CD8-positive, alpha-beta T cell (primary cell): ENCODE measurements at regions of chr15 and their contacts with region 1.

Region 1: GRCh38 chr15:60362321-60363086 is 35.3 kb downstream of the ANXA2 start:
- DNase-seq: peak in 1 of 9 experiments; percentile 7
- ATAC-seq: peak; percentile 61
- H3K4me3 ChIP-seq: no peak overlapping the region
- H3K4me3 Mint-ChIP-seq: no peak overlapping the region
- H3K27ac ChIP-seq: peak overlapping the region in 1 of 2 experiments; percentile 16
- H3K27ac Mint-ChIP-seq: no peak overlapping the region
- H3K4me1 ChIP-seq: no peaks in the 10 kb centered on the region
- H3K4me1 Mint-ChIP-seq: peaks cover 5% of the 10 kb centered on the region
- H3K27me3 ChIP-seq: no peaks in the 10 kb centered on the region
- H3K27me3 Mint-ChIP-seq: no peaks in the 10 kb centered on the region
- CTCF ChIP-seq: no peak

Region 2: DNA sequence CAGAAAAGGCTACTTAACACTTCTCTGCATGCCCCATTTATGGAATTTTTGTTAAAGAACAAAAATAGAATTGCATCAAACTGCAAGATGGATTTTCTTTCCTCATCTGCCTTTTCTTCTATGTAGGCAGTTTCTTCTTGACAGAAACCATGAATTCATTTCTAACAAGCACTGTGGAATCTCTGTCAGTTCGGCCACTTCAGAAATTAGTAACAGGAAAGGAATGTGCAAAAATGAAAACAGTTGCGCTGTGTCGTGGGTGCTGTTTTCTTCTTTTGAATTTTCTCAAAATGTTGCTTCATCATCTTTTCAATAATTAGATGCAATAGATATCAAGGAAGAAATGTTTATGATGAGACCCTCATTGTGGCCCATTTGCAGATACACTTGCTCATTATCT is 206.8 kb before region 1 on chr15:
- CTCF ChIA-PET with region 1: no interaction called
- POLR2A ChIA-PET with region 1: no interaction called
- intact Hi-C with region 1: no loop called
- DNase-seq: no peak
- ATAC-seq: no peak
- H3K4me3 ChIP-seq: no peak overlapping the region
- H3K4me3 Mint-ChIP-seq: no peak overlapping the region
- H3K27ac ChIP-seq: no peak overlapping the region
- H3K27ac Mint-ChIP-seq: no peak overlapping the region
- H3K4me1 ChIP-seq: no peaks in the 10 kb centered on the region
- H3K4me1 Mint-ChIP-seq: no peaks in the 10 kb centered on the region
- H3K27me3 ChIP-seq: peaks cover 0 to 3% of the 10 kb centered on the region in 2 experiments
- H3K27me3 Mint-ChIP-seq: peaks cover 19% of the 10 kb centered on the region
- CTCF ChIP-seq: no peak

Region 3: DNA sequence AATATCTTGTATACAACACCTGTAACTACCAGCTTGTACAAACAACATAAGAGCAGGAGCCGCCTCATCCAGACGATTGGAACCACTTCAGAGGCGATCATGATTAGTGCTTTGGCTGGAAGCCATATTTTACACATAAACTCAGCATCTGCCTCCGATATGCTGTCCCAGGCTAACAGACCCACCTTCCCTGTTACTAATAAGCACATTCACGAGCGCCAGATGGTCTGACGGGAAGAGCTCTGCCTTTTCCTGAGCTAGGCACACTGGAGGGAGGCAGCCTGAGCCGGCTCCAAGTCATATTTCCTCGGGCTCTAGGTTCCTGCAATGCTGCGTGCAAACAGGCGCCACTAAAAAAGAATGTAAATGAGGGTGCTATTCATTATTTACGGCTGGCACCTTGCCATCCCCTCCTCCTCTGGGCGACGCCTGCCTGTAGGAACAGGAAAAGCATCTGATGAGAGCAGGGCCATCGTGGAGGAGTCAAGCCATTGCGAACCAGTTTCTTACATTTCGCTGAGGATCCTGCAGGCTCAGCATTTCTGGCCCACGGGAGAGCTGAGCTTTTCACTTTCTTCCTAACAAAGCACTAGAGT is 63.0 kb before region 1 on chr15:
- CTCF ChIA-PET with region 1: no interaction called
- POLR2A ChIA-PET with region 1: no interaction called
- intact Hi-C with region 1: no loop called
- DNase-seq: no peak
- ATAC-seq: no peak
- H3K4me3 ChIP-seq: no peak overlapping the region
- H3K4me3 Mint-ChIP-seq: no peak overlapping the region
- H3K27ac ChIP-seq: no peak overlapping the region
- H3K27ac Mint-ChIP-seq: no peak overlapping the region
- H3K4me1 ChIP-seq: no peaks in the 10 kb centered on the region
- H3K4me1 Mint-ChIP-seq: no peaks in the 10 kb centered on the region
- H3K27me3 ChIP-seq: no peaks in the 10 kb centered on the region
- H3K27me3 Mint-ChIP-seq: peaks cover 20% of the 10 kb centered on the region
- CTCF ChIP-seq: no peak

Region 4: DNA sequence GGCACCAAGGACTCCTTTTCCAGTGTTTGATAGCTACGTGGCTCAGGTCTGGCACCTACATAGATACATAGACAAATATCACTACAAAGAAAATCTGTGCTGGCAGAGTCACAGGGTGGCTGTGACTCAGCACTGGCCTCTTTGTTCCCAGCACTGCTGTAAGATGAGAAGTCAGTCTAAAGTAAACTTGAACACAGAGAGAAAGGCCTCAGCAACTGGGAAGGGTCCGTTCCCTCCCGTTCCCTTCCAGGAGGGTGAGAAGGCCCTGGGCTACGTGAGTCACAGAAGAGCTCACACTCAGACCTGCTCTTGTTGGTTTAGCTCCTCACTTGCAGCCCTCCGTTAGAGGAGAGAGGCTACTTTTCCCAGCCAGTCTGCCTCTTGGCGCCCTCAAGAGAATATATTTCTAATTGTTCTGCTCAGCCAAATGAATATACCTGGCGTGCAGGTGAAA is 12.2 kb after region 1 on chr15:
- CTCF ChIA-PET with region 1: interaction called, 30 read pairs
- POLR2A ChIA-PET with region 1: interaction called, 3 read pairs
- intact Hi-C with region 1: no loop called
- DNase-seq: no peak
- ATAC-seq: no peak
- H3K4me3 ChIP-seq: no peak overlapping the region
- H3K4me3 Mint-ChIP-seq: no peak overlapping the region
- H3K27ac ChIP-seq: no peak overlapping the region
- H3K27ac Mint-ChIP-seq: no peak overlapping the region
- H3K4me1 ChIP-seq: no peaks in the 10 kb centered on the region
- H3K4me1 Mint-ChIP-seq: no peaks in the 10 kb centered on the region
- H3K27me3 ChIP-seq: no peaks in the 10 kb centered on the region
- H3K27me3 Mint-ChIP-seq: no peaks in the 10 kb centered on the region
- CTCF ChIP-seq: no peak

Region 5: DNA sequence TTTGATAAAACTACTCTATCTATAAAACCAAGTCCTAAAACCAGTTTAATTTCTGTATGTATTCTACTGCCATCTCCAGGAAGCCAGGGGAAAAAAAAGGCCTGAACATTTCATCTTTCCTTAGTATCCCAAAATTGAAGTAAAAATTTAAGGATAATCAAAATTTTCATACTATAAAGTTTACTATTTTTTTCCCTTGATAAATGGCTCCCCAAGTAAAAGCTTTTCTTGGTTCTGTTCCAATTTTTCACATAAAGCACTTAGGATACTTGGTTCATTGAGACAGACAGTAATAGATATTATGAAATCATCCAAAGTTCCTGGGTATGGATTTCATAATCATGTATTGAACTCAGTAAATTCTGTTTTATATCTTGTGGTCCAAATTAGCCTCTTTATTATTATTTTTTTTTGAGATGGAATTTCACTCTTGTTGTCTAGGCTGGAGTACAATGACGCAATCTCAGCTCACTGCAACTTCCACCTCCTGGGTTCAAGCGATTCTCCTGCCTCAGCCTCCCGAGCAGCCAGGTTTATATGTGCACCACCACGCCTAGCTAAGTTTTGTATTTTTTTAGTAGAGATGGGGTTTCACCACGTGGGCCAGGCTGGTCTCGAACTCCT is 81.9 kb after region 1 on chr15:
- CTCF ChIA-PET with region 1: interaction called, 10 read pairs
- POLR2A ChIA-PET with region 1: no interaction called
- intact Hi-C with region 1: loop called (anchors 1 kb)
- DNase-seq: peak in 1 of 9 experiments; percentile 19
- ATAC-seq: no peak
- H3K4me3 ChIP-seq: no peak overlapping the region
- H3K4me3 Mint-ChIP-seq: no peak overlapping the region
- H3K27ac ChIP-seq: no peak overlapping the region
- H3K27ac Mint-ChIP-seq: no peak overlapping the region
- H3K4me1 ChIP-seq: no peaks in the 10 kb centered on the region
- H3K4me1 Mint-ChIP-seq: peaks cover 7% of the 10 kb centered on the region
- H3K27me3 ChIP-seq: no peaks in the 10 kb centered on the region
- H3K27me3 Mint-ChIP-seq: no peaks in the 10 kb centered on the region
- CTCF ChIP-seq: no peak

Region 6: GRCh38 chr15:60568301-60568742 is 205.8 kb after region 1 on chr15:
- CTCF ChIA-PET with region 1: no interaction called
- POLR2A ChIA-PET with region 1: no interaction called
- intact Hi-C with region 1: no loop called
- DNase-seq: peak in 1 of 9 experiments; percentile 41
- ATAC-seq: no peak
- H3K4me3 ChIP-seq: no peak overlapping the region
- H3K4me3 Mint-ChIP-seq: peak overlapping the region; percentile 27
- H3K27ac ChIP-seq: peak overlapping the region in 1 of 2 experiments; percentile 68
- H3K27ac Mint-ChIP-seq: peak overlapping the region; percentile 80
- H3K4me1 ChIP-seq: peaks cover 93% of the 10 kb centered on the region
- H3K4me1 Mint-ChIP-seq: peaks cover 93% of the 10 kb centered on the region
- H3K27me3 ChIP-seq: no peaks in the 10 kb centered on the region
- H3K27me3 Mint-ChIP-seq: no peaks in the 10 kb centered on the region
- CTCF ChIP-seq: no peak

Region 7: DNA sequence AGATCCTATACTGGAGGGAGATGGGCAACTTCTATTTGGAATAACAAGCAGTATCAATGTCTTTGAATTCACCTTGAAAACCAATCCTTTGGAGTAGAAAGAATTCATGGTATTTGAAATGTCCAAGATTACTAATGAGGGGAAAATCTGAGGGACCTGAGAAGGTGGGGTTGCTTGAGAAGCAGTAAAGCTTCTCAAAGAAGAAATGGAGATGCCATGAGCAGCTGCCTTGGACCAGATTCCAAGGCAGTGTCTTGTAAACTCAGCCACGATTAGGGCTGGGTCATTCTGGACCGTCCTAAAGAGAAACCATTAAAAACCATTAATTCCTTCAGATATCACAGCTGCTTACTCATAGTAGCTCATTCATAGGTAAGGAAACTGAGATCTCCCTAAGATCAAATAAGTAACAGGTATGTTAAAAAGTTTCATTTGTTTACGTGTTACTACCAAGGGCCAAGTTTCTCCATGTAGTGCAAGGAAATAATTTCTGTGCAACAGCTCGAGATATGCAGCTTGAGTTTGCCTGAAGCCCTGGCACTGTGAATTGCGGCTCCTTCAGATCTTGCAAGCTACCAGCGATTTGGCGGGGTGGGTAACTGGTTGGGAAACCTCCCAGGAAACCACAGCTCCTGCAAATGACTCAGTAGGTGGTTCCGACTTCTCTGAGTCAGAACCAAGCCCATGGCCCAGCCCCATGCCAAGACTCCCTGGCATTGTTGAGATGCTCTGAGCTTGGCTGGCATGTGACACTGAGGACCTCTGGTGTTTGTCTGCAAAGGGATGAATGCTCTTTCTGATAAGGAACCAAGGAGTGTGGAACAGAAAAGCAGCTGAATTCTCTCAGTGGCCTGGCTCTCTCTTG is 569.8 kb after region 1 on chr15:
- CTCF ChIA-PET with region 1: interaction called, 9 read pairs
- POLR2A ChIA-PET with region 1: no interaction called
- intact Hi-C with region 1: loop called in 1 of 2 experiments (anchors 1 kb)
- DNase-seq: peak; percentile 6 to 77 (median 52)
- ATAC-seq: peak; percentile 73
- H3K4me3 ChIP-seq: no peak overlapping the region
- H3K4me3 Mint-ChIP-seq: no peak overlapping the region
- H3K27ac ChIP-seq: no peak overlapping the region
- H3K27ac Mint-ChIP-seq: no peak overlapping the region
- H3K4me1 ChIP-seq: peaks cover 8% of the 10 kb centered on the region
- H3K4me1 Mint-ChIP-seq: peaks cover 7% of the 10 kb centered on the region
- H3K27me3 ChIP-seq: no peaks in the 10 kb centered on the region
- H3K27me3 Mint-ChIP-seq: peaks cover 3% of the 10 kb centered on the region
- CTCF ChIP-seq: no peak

Region 8: GRCh38 chr15:61834076-61834697 is 1471.7 kb after region 1 on chr15:
- CTCF ChIA-PET with region 1: interaction called, 15 read pairs
- POLR2A ChIA-PET with region 1: no interaction called
- intact Hi-C with region 1: loop called in 1 of 2 experiments (anchors 1 kb)
- DNase-seq: peak; percentile 39 to 78 (median 71)
- ATAC-seq: peak; percentile 85
- H3K4me3 ChIP-seq: no peak overlapping the region
- H3K4me3 Mint-ChIP-seq: no peak overlapping the region
- H3K27ac ChIP-seq: no peak overlapping the region
- H3K27ac Mint-ChIP-seq: no peak overlapping the region
- H3K4me1 ChIP-seq: no peaks in the 10 kb centered on the region
- H3K4me1 Mint-ChIP-seq: peaks cover 8% of the 10 kb centered on the region
- H3K27me3 ChIP-seq: peaks cover 0 to 4% of the 10 kb centered on the region in 2 experiments
- H3K27me3 Mint-ChIP-seq: peaks cover 22% of the 10 kb centered on the region
- CTCF ChIP-seq: peak; percentile 90